WTC11 (cell line): ENCODE measurements at regions of chr10 and their contacts with region 1.

Region 1: DNA sequence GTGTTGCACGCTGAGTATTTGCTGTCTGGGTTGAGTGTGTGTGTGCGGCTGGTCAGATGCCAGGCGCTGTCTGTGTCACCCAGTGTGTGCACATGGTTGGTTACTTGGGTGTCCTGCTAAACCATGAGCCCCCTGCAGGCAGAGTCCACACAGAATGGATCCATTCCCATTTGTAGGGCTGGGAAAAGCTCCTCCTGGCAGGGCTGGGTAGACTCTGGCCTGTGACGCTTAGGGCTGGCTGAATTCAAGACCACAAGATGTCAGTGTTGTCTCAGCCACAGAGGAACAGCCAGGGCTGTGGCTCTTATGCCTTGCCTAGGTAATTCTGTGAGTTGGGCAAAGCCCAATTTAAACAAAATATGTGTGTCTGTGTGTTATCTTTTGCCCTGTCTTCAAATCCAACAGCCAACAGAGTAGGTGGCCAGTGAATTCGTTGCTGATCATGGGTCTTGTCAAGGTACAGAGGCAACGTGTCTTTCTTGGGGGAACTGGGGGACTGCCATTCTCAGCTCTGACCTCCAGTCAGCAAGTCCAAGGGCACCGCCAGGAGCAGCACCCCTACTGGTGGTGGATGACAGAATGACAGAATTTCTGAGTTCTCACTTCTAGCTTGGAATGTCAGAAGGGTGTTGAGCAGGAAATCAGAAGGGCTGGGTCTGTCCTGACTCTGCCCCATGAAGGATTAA is 285.1 kb downstream of the CCSER2 start:
- DNase-seq: peak; percentile 75
- ATAC-seq: peak; percentile 99
- H3K4me3 Mint-ChIP-seq: no peak overlapping the region
- H3K27ac Mint-ChIP-seq: peak overlapping the region; percentile 64; the same call in 1 of the 2 replicates
- H3K4me1 Mint-ChIP-seq: peaks cover 18% of the 10 kb centered on the region
- H3K27me3 Mint-ChIP-seq: no peaks in the 10 kb centered on the region
- CTCF ChIP-seq: peak; percentile 22; the same call in 1 of the 2 replicates

Region 2: GRCh38 chr10:84510121-84510520 is 103.4 kb before region 1 on chr10:
- CTCF ChIA-PET with region 1: no interaction called
- POLR2A ChIA-PET with region 1: no interaction called
- DNase-seq: no peak
- ATAC-seq: peak; percentile 53
- H3K4me3 Mint-ChIP-seq: no peak overlapping the region
- H3K27ac Mint-ChIP-seq: peak overlapping the region; percentile 49; the same call in 1 of the 2 replicates
- H3K4me1 Mint-ChIP-seq: peaks cover 14% of the 10 kb centered on the region
- H3K27me3 Mint-ChIP-seq: no peaks in the 10 kb centered on the region
- CTCF ChIP-seq: no peak

Region 3: DNA sequence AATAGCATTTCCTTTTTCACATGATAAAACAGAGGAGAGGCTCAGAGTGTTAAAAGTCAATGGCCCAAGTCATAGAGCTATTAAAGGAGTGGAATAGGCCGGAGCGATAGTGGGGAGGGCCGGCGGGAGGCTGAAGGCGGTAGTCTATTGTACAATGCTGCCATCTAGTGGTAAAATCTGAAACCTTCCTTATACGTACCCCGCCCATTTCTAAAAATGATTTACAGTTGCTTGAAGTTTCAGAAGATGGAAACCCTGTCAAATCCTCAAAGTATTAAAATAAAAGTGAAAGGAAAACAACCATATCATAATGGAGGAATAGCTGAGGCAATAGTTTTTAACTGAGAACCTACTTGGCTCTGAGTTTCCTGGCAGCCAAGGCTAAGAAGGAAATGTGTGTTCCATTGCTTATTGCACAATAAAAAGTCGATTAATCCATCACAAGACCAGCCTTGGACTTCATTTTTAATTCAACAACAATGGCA is 76.0 kb before region 1 on chr10:
- CTCF ChIA-PET with region 1: interaction called, 95 read pairs
- POLR2A ChIA-PET with region 1: interaction called, 3 read pairs
- DNase-seq: peak; percentile 32
- ATAC-seq: peak; percentile 35
- H3K4me3 Mint-ChIP-seq: no peak overlapping the region
- H3K27ac Mint-ChIP-seq: no peak overlapping the region
- H3K4me1 Mint-ChIP-seq: peaks cover 40% of the 10 kb centered on the region
- H3K27me3 Mint-ChIP-seq: peaks cover 5% of the 10 kb centered on the region
- CTCF ChIP-seq: peak; percentile 62

Region 4: GRCh38 chr10:84583501-84583900 is 30.0 kb before region 1 on chr10:
- CTCF ChIA-PET with region 1: interaction called, 20 read pairs
- POLR2A ChIA-PET with region 1: no interaction called
- DNase-seq: no peak
- ATAC-seq: peak; percentile 15; the same call in 1 of the 2 replicates
- H3K4me3 Mint-ChIP-seq: no peak overlapping the region
- H3K27ac Mint-ChIP-seq: no peak overlapping the region
- H3K4me1 Mint-ChIP-seq: peaks cover 31% of the 10 kb centered on the region
- H3K27me3 Mint-ChIP-seq: peaks cover 14% of the 10 kb centered on the region; the same call in 1 of the 2 replicates
- CTCF ChIP-seq: no peak

Region 5: GRCh38 chr10:84626397-84627087 is 13.1 kb after region 1 on chr10:
- CTCF ChIA-PET with region 1: interaction called, 22 read pairs
- POLR2A ChIA-PET with region 1: interaction called, 6 read pairs
- DNase-seq: no peak
- ATAC-seq: peak; percentile 59
- H3K4me3 Mint-ChIP-seq: no peak overlapping the region
- H3K27ac Mint-ChIP-seq: no peak overlapping the region
- H3K4me1 Mint-ChIP-seq: no peaks in the 10 kb centered on the region
- H3K27me3 Mint-ChIP-seq: no peaks in the 10 kb centered on the region
- CTCF ChIP-seq: no peak

Region 6: GRCh38 chr10:84659497-84660439 is 46.3 kb after region 1 on chr10:
- CTCF ChIA-PET with region 1: interaction called, 52 read pairs
- POLR2A ChIA-PET with region 1: no interaction called
- DNase-seq: no peak
- ATAC-seq: peak; percentile 56
- H3K4me3 Mint-ChIP-seq: no peak overlapping the region
- H3K27ac Mint-ChIP-seq: no peak overlapping the region
- H3K4me1 Mint-ChIP-seq: no peaks in the 10 kb centered on the region; the same call in 1 of the 2 replicates
- H3K27me3 Mint-ChIP-seq: no peaks in the 10 kb centered on the region
- CTCF ChIP-seq: no peak

Region 7: GRCh38 chr10:84739641-84740040 is 126.2 kb after region 1 on chr10:
- CTCF ChIA-PET with region 1: interaction called, 19 read pairs
- POLR2A ChIA-PET with region 1: no interaction called
- DNase-seq: no peak
- ATAC-seq: peak; percentile 56; the same call in 1 of the 2 replicates
- H3K4me3 Mint-ChIP-seq: no peak overlapping the region
- H3K27ac Mint-ChIP-seq: no peak overlapping the region
- H3K4me1 Mint-ChIP-seq: no peaks in the 10 kb centered on the region
- H3K27me3 Mint-ChIP-seq: no peaks in the 10 kb centered on the region
- CTCF ChIP-seq: no peak

Region 8: GRCh38 chr10:84783386-84783785 is 169.9 kb after region 1 on chr10:
- CTCF ChIA-PET with region 1: interaction called, 10 read pairs
- POLR2A ChIA-PET with region 1: no interaction called
- DNase-seq: peak; percentile 38
- ATAC-seq: peak; percentile 97
- H3K4me3 Mint-ChIP-seq: no peak overlapping the region
- H3K27ac Mint-ChIP-seq: no peak overlapping the region
- H3K4me1 Mint-ChIP-seq: peaks cover 14% of the 10 kb centered on the region
- H3K27me3 Mint-ChIP-seq: no peaks in the 10 kb centered on the region
- CTCF ChIP-seq: peak; percentile 50; the same call in 1 of the 2 replicates